HAP-1 (cell line): ENCODE measurements at regions of chr2 and their contacts with region 1.

Region 1: GRCh38 chr2:149559341-149560068 is 28.1 kb downstream of the MMADHC start:
- DNase-seq: peak; percentile 4 to 11
- H3K4me3 ChIP-seq: no peak overlapping the region
- H3K4me1 ChIP-seq: no peaks in the 10 kb centered on the region
- H3K27me3 ChIP-seq: no peaks in the 10 kb centered on the region

Region 2: DNA sequence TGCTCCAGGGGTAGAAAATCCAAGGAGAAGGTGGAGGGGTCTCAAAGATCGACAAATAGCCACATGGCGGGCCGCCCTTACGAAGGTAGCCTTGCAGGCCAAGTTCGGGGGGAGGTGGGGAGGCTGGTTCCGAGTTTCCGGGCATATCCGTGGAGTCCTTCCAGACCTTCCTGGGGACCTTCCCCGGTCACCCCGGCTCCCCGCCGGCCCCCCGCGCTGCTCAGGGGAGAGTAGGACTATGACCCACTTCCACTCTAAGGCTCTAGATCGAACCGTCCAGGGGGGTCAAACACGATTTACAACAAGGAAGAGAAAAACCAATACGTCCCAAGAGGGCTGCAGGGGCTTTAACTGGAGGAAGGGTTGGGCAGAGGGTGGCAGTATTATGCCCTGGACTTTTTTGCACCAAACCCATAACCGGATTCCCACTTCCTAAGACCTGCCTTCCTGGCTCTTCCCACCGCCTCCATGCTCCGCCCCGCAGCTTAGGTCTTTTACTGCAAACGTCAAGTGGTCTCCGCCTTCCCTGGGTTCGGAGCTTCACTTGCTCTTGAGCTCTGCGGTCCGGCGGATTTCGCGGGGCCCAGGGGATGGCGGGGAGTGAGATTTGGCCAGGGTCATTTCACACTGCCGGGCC is 229.9 kb before region 1 on chr2:
- in situ Hi-C with region 1: loop called (anchors 10 kb)
- DNase-seq: peak; percentile 78 to 86
- H3K4me3 ChIP-seq: peak overlapping the region; percentile 62
- H3K4me1 ChIP-seq: peaks cover 11% of the 10 kb centered on the region
- H3K27me3 ChIP-seq: no peaks in the 10 kb centered on the region

Region 3: DNA sequence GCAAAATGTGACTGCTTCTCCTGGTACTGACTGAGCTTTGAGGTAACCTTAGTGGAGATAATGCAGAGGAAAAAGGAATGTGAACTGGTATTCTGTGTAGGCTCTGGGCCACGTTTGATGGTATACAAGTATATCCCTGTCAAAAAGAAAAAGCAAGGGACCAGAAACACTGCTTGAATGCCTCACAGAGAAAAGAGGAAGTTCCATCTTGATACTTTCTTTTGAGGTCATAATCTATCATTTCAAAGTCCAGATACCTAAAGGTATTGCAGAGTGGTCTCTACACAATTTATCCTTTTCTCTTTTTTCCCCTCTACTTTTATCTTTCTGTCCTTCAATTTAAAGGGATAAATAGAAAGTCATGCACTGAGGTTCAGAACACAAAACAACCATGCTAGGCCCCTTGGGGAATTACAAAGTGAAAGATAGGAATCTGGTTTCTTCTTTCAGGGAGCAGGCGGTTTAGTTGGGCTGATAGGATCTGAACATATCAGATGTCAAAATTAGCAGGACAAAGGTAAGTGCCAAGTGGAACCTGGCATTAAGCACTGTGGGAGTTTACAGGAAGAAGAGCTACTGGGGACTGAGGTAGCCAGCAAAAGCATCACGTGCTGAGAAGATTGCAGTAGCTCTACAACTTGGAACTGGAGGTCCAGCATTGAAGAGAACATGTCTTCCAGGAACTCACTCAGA is 107.9 kb before region 1 on chr2:
- in situ Hi-C with region 1: no loop called
- DNase-seq: peak; percentile 8 to 14
- H3K4me3 ChIP-seq: no peak overlapping the region
- H3K4me1 ChIP-seq: peaks cover 3% of the 10 kb centered on the region; the same call in 1 of the 2 replicates
- H3K27me3 ChIP-seq: no peaks in the 10 kb centered on the region